ENCODE measurements at regions of chr11 and their contacts with region 1.

Region 1: GRCh38 chr11:36492724-36493304 is 17.3 kb downstream of the TRAF6 start:
- H3K4me3 Mint-ChIP-seq: no peak overlapping the region
- H3K27ac Mint-ChIP-seq: no peak overlapping the region
- H3K4me1 Mint-ChIP-seq: peaks cover 9% of the 10 kb centered on the region
- H3K27me3 Mint-ChIP-seq: no peaks in the 10 kb centered on the region

Region 2: GRCh38 chr11:36289226-36289852 is 203.5 kb before region 1 on chr11 and contains the start of gene COMMD9:
- intact Hi-C with region 1: loop called (anchors 1 kb)
- H3K4me3 Mint-ChIP-seq: peak within 1 kb of the TSS; percentile 93
- H3K27ac Mint-ChIP-seq: peak within 1 kb of the TSS; percentile 91
- H3K4me1 Mint-ChIP-seq: peaks cover 43% of the 10 kb centered on the region
- H3K27me3 Mint-ChIP-seq: peaks cover 2% of the 10 kb centered on the region

Region 3: DNA sequence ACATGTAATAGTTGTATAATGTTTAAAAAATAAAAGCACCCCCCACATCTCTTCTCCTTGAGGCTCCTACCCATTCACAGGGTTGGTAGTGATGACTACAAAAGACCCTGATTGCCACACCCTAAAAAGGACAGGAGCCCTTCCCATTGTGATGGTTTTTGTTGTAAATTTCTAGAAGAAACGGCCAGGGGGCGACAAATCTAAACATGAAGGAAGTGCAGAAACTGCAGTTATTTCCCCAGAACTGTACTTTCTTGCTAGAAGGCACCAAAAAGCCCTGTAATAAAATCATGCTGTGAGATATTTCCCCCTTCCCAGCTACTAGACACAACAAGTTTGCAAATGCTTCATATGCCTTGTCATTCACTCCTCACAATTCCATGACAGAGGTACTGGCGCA is 185.9 kb before region 1 on chr11:
- intact Hi-C with region 1: loop called (anchors 5 kb)
- H3K4me3 Mint-ChIP-seq: no peak overlapping the region
- H3K27ac Mint-ChIP-seq: no peak overlapping the region
- H3K4me1 Mint-ChIP-seq: peaks cover 5% of the 10 kb centered on the region
- H3K27me3 Mint-ChIP-seq: peaks cover 8% of the 10 kb centered on the region

Region 4: DNA sequence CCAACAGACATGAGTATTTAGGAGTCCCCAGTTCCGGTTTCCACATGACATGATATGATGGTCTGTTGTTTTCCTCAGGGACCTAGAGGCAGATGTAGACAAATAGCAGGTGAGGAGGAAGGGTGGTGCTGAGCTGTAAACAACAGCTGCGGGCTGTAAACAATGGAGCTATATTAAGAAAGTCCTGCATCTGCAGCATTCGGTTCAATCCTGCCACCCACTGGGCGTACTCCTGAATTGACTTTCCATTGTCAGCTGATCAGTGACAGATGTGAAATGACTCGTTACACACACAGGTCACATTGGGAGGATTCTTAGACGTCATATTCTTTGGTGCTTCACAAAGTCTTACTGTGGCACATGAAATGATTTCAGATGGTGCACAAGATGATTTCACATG is 48.2 kb after region 1 on chr11:
- intact Hi-C with region 1: loop called (anchors 1 kb)
- H3K4me3 Mint-ChIP-seq: no peak overlapping the region
- H3K27ac Mint-ChIP-seq: no peak overlapping the region
- H3K4me1 Mint-ChIP-seq: peaks cover 4% of the 10 kb centered on the region
- H3K27me3 Mint-ChIP-seq: no peaks in the 10 kb centered on the region

Measured in dendritic cell treated with granulocyte-macrophage colony-stimulating factor and Interleukin-4, amounts not matched to agents 40 ng/mL and 50 ng/mL, for 4 days (primary cell).